ENCODE measurements at regions of chr3 and their contacts with region 1.

Region 1: DNA sequence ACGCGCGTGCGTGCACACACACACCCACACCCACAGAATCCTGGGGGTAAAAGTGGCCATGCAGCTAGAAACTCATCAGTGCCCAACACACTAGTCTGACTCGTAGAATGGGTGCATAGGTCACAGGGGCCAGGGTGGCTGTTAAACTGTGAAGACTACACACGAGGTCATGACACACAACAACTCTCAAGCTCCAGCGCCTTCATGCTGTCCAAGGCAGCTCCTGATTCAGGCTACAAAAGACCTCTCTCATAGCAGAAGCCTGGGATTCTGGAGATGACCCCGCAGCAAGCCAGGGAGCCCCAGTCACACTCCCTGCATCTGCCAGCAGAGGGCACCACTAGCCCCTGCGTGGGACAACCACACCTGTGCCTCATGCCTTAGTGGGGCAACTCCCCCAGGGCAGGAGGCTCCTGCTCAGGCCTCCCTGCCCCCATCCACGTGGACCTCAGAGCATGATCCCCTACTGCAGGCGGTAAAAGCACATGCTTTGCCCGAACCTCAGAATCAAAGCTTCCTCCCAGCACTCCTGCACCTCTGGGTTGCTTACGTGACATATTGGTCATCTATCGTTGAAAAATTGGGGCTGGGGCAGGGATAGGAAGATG is 93.1 kb downstream of the LRIG1 start:
- DNase-seq: peak; percentile 69
- H3K4me3 Mint-ChIP-seq: no peak overlapping the region
- H3K27ac Mint-ChIP-seq: no peak overlapping the region
- H3K4me1 Mint-ChIP-seq: no peaks in the 10 kb centered on the region
- H3K27me3 Mint-ChIP-seq: no peaks in the 10 kb centered on the region
- CTCF ChIP-seq: peak; percentile 94

Region 2: DNA sequence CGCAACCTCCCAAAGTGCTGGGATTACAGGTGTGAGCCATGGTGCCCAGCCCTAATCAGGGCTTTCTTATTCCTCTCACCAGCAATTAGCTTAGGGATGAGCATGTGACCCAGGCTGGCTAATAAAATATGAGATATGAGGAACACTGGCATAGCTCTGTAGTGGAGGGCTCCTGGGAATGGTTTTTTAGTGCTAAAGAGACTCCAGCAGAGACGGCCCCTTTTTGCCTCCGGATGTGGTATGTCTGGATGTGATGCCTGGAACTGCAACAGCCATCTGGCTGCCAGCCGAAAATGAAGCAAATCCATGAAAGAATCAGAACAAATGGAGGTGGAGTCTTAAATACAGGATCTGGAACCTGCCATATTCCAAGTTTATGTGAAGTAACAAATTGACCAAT is 299.9 kb before region 1 on chr3:
- CTCF ChIA-PET with region 1: no interaction called
- POLR2A ChIA-PET with region 1: no interaction called
- intact Hi-C with region 1: no loop called
- DNase-seq: peak; percentile 18
- H3K4me3 Mint-ChIP-seq: no peak overlapping the region
- H3K27ac Mint-ChIP-seq: no peak overlapping the region
- H3K4me1 Mint-ChIP-seq: peaks cover 19% of the 10 kb centered on the region
- H3K27me3 Mint-ChIP-seq: no peaks in the 10 kb centered on the region
- CTCF ChIP-seq: no peak

Region 3: DNA sequence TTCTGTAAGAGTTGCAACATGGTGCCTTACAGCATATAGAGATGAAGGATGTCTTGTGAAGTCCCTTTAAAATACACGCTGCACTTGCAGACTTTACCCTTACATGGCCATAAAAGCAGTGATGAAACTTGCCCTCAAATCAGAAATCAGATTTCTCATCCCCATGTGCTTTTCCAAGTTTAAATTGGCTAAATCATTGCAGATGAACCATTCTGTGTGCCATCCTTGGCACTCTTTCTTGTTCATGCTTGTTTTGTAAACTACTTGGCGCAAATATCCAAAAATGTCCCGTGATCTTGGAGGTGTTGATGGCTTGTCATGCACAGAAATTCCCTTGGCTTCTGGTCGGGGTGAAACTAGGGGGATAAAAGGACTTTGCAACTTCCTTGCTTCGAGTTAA is 42.6 kb before region 1 on chr3:
- CTCF ChIA-PET with region 1: no interaction called
- POLR2A ChIA-PET with region 1: no interaction called
- intact Hi-C with region 1: no loop called
- DNase-seq: no peak
- H3K4me3 Mint-ChIP-seq: no peak overlapping the region
- H3K27ac Mint-ChIP-seq: no peak overlapping the region
- H3K4me1 Mint-ChIP-seq: no peaks in the 10 kb centered on the region
- H3K27me3 Mint-ChIP-seq: no peaks in the 10 kb centered on the region
- CTCF ChIP-seq: no peak

Region 4: GRCh38 chr3:66378256-66378823 is 29.4 kb before region 1 on chr3:
- CTCF ChIA-PET with region 1: interaction called, 22 read pairs
- POLR2A ChIA-PET with region 1: no interaction called
- intact Hi-C with region 1: no loop called
- DNase-seq: peak; percentile 16
- H3K4me3 Mint-ChIP-seq: no peak overlapping the region
- H3K27ac Mint-ChIP-seq: no peak overlapping the region
- H3K4me1 Mint-ChIP-seq: peaks cover 9% of the 10 kb centered on the region
- H3K27me3 Mint-ChIP-seq: no peaks in the 10 kb centered on the region
- CTCF ChIP-seq: peak; percentile 23

Region 5: GRCh38 chr3:66418475-66418931 is 10.8 kb after region 1 on chr3:
- CTCF ChIA-PET with region 1: interaction called, 13 read pairs
- POLR2A ChIA-PET with region 1: no interaction called
- intact Hi-C with region 1: no loop called
- DNase-seq: no peak
- H3K4me3 Mint-ChIP-seq: no peak overlapping the region
- H3K27ac Mint-ChIP-seq: no peak overlapping the region
- H3K4me1 Mint-ChIP-seq: peaks cover 5% of the 10 kb centered on the region
- H3K27me3 Mint-ChIP-seq: no peaks in the 10 kb centered on the region
- CTCF ChIP-seq: no peak

Region 6: GRCh38 chr3:66490214-66490613 is 82.5 kb after region 1 on chr3:
- CTCF ChIA-PET with region 1: interaction called, 17 read pairs
- POLR2A ChIA-PET with region 1: no interaction called
- intact Hi-C with region 1: no loop called
- DNase-seq: peak; percentile 49
- H3K4me3 Mint-ChIP-seq: no peak overlapping the region
- H3K27ac Mint-ChIP-seq: no peak overlapping the region
- H3K4me1 Mint-ChIP-seq: peaks cover 39% of the 10 kb centered on the region
- H3K27me3 Mint-ChIP-seq: no peaks in the 10 kb centered on the region
- CTCF ChIP-seq: no peak

Region 7: GRCh38 chr3:66803206-66803605 is 395.5 kb after region 1 on chr3:
- CTCF ChIA-PET with region 1: interaction called, 604 read pairs
- POLR2A ChIA-PET with region 1: no interaction called
- intact Hi-C with region 1: no loop called
- DNase-seq: no peak
- H3K4me3 Mint-ChIP-seq: no peak overlapping the region
- H3K27ac Mint-ChIP-seq: no peak overlapping the region
- H3K4me1 Mint-ChIP-seq: no peaks in the 10 kb centered on the region
- H3K27me3 Mint-ChIP-seq: no peaks in the 10 kb centered on the region
- CTCF ChIP-seq: no peak

Measured in MCF 10A (cell line).